ENCODE measurements at regions of chr20 and their contacts with region 1.

Region 1: DNA sequence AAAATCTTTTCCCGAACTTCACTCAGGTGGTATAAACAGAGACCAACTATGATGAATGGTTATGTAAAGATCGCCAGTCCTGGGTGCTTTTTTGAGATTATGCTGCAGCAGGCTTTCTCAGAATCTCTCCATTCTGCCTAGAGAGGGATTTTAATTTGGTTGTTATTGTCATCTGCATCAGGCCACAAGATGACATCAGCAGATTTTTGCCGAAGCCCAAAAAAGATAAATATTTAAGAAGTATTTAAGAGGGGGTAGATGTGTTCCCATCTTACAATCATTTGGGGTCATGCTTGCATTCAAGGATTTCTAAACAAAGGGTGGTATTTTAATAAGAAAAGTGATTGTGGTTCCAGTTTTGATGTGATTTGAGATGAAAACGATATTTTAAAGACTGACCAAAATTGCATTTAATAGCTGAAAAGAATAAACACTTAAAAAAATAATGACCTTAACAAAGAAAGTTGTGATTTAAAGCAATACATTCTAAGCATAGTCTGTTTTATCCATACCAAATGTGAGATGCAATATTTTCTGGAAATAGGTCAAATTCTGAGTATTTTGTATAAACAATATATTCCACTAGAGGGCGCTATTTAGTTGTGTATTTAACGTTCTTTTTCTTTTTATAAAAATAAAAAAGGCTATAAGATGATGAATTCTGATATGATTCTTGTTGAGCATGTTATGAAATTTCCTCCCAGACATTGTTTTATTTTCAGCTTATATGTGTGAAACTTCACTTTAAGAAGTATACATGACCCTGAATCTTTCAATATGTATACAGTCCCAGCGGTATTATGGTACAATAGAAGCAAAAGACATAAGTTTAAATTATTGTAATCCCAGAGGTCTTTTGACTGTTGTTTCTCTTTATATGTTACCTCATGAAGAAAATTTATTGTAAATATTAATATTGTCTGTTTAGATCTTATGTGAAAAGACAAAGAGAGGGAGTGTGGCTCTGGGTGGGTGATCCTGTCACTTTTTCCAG is 51.0 kb upstream of the ZFP64 start:
- H3K4me3 Mint-ChIP-seq: no peak overlapping the region
- H3K27ac Mint-ChIP-seq: no peak overlapping the region
- H3K4me1 Mint-ChIP-seq: no peaks in the 10 kb centered on the region
- H3K27me3 Mint-ChIP-seq: peaks cover 2% of the 10 kb centered on the region

Region 2: GRCh38 chr20:52291109-52291508 is 48.6 kb after region 1 on chr20:
- intact Hi-C with region 1: no loop called
- H3K4me3 Mint-ChIP-seq: no peak overlapping the region
- H3K27ac Mint-ChIP-seq: no peak overlapping the region
- H3K4me1 Mint-ChIP-seq: peaks cover 5% of the 10 kb centered on the region
- H3K27me3 Mint-ChIP-seq: peaks cover 2% of the 10 kb centered on the region

Region 3: DNA sequence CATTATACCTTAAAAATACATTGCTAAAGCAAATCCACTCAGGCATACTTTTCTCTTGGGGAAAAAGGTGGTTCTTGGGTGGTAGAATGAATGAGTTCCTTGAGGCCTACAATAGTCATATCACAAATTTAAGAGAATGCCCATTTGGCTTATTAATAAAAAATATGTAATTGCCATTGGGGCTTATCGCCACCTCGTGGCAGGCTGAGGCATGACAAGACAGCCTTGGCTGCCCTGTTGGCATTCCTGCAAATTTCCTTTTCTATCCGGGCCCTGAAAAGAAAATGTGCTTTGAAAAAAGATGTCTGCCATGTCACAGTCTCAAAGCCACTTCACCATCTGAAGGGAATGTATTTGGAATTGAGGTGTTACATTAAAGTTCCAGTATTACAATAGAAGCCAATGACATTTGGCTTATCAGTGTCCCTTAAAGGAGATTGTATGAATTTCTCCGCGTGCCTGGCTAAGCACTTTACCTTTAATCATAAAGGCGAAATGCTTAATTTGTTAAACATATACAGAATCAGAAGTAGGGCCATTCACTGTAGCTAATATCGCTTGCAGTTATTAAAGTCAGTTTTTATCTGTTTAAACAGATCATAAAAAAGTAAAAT is 137.3 kb after region 1 on chr20:
- intact Hi-C with region 1: loop called (anchors 1 kb)
- H3K4me3 Mint-ChIP-seq: no peak overlapping the region
- H3K27ac Mint-ChIP-seq: no peak overlapping the region
- H3K4me1 Mint-ChIP-seq: no peaks in the 10 kb centered on the region
- H3K27me3 Mint-ChIP-seq: peaks cover 4% of the 10 kb centered on the region

Region 4: DNA sequence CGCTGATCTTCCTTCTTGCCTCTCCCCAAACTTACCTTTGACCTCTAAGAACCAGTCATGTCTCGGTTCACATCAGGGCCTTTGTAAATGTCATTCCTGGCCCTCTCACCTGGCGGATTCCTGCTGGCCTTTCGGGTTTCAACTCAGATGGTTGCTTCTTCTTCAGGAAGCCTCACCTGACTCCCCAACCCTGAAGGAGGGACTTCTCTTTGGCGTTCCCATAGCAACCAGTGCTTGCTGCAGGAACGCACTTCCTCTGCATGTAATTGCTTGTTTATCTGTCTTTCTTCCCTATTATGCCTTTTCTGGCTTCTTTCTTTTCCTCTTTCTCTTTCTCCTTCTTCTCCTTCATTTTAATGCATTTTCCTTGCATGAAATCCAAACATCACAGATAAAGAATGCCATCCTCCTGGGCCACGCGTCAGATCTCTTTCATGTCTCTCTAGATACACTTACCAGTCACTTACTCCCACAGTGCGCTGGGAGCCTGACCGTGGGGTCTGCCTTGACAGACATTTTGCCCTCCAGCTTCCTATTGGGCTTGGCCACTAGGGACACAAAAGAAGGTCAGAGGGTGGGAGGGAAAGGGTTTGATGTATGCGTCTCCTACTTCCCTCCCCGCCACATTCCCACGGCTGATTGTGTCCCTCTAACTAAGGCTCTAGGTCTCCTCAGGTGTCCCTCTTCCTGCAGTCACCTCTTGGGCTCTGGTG is 433.9 kb after region 1 on chr20:
- intact Hi-C with region 1: no loop called
- H3K4me3 Mint-ChIP-seq: no peak overlapping the region
- H3K27ac Mint-ChIP-seq: no peak overlapping the region
- H3K4me1 Mint-ChIP-seq: peaks cover 47% of the 10 kb centered on the region
- H3K27me3 Mint-ChIP-seq: no peaks in the 10 kb centered on the region

Region 5: DNA sequence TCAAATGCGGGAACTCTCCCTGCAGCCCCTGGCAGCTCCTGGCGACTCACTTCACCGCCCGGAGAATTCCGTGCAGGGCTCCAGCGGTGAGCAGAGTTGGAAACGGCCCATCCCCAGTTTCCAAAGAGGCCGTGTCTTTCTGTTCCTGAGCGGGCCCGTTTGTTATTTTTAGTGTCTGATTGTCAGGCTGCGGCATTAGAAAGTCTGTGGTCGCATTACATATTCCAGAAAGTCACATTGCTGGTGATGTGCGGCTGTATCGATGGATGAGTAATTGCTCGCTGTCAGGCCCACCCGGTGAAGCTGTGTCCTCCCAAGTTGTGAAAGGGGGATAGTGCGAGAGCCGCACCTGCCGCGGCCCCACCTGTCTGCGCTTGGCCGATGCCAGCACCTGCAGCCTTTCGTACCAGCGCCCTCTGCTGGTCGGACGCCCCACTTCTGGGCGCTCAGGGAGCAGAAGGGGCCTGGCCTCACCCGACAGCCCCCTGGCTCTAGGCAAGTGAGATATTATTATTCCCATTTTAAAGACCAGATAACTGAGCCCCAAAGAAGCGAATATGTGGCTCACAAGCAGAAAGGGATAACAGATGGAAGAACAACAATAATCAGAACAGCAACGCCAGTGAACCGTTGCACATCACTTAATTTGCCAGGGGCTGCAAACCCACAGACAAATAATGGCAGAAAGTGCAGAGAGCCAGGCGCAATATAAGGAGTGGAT is 974.5 kb after region 1 on chr20:
- intact Hi-C with region 1: loop called (anchors 5 kb)
- H3K4me3 Mint-ChIP-seq: no peak overlapping the region
- H3K27ac Mint-ChIP-seq: no peak overlapping the region
- H3K4me1 Mint-ChIP-seq: no peaks in the 10 kb centered on the region
- H3K27me3 Mint-ChIP-seq: peaks cover 8% of the 10 kb centered on the region

Region 6: GRCh38 chr20:53547664-53548239 is 1305.2 kb after region 1 on chr20:
- intact Hi-C with region 1: loop called (anchors 5 kb)
- H3K4me3 Mint-ChIP-seq: no peak overlapping the region
- H3K27ac Mint-ChIP-seq: no peak overlapping the region
- H3K4me1 Mint-ChIP-seq: no peaks in the 10 kb centered on the region
- H3K27me3 Mint-ChIP-seq: no peaks in the 10 kb centered on the region